ENCODE measurements at regions of chr10 and their contacts with region 1.

Region 1: DNA sequence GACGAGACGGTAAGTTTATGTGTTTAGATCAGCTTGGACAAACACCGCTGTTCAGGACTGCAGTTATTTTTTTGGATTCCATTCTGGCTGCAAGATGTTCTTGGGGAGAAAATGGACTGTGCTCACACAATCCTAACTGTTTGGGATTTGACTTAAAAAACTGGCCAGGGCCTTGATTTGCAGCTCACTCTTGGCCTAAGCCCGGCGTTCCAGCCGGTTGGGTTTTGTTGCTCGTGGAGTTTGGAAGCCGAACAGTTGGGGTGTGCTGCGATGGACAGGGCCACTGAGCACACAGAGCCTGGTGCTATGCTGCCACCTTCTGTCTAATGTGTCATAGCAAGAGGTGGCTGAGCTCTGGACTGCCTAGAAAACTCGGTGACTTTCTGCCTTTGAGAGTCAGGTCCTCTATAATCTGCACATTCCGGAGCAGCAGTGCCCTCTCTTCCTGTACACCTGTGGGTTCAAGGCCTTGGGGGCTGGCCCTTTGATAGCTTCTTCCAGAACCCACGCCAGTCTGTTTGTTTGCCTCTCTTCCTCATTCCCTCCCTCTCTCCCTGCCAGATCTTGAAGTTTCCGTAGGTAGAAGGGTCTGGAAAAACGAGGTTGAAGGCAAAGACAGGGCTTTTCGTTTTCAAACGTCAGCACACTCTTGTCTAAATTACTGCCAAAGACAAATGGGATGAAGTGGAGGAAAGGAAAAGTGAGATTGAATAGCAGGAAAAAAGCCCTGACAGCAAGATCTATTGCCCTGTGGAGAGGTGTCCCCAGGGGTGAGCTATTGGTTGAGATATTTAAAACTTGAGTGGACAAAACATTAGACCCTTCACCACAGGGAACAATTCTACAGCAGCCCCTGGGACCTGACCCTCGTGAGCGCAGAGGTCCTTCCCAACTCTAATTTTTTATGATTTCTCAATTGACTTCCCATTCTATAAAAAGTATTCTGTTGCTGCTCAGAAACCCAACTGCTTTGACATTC is 167.5 kb upstream of the HABP2 start:
- DNase-seq: peak; percentile 83
- H3K4me3 Mint-ChIP-seq: no peak overlapping the region
- H3K27ac Mint-ChIP-seq: no peak overlapping the region
- H3K4me1 Mint-ChIP-seq: peaks cover 20% of the 10 kb centered on the region
- H3K27me3 Mint-ChIP-seq: peaks cover 32% of the 10 kb centered on the region
- CTCF ChIP-seq: peak; percentile 91

Region 2: GRCh38 chr10:112487964-112488363 is 897.3 kb before region 1 on chr10:
- CTCF ChIA-PET with region 1: interaction called, 10 read pairs
- POLR2A ChIA-PET with region 1: no interaction called
- intact Hi-C with region 1: no loop called
- DNase-seq: no peak
- H3K4me3 Mint-ChIP-seq: no peak overlapping the region
- H3K27ac Mint-ChIP-seq: no peak overlapping the region
- H3K4me1 Mint-ChIP-seq: peaks cover 6% of the 10 kb centered on the region
- H3K27me3 Mint-ChIP-seq: no peaks in the 10 kb centered on the region
- CTCF ChIP-seq: no peak

Region 3: DNA sequence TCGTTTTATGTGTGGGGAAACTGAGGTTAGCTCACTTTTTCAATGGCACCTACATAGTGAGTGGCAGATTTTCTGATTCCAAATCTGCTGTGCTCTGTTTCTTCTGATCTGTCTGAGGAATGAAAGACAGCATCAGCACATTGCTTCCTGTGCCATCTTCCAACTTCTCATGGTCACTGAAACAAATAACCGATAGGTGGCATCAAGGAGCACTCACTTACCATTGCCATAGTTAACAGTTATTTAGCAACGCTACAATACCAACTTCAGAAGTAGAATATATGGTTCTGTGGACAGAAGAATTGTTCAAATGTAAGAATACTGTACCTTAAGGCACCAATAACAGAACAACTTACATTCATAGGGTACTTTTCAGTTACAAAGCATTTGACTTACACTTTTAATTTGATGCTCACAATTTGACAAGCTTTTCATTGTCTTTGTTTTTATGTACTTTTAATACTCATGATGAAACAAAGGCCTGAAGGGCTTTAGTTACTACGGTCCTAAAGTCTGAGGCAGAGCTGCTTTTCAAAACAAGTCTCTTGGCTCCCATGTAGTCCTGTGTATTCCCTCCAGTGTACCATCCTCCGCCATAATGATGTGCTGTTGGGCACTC is 664.1 kb before region 1 on chr10:
- CTCF ChIA-PET with region 1: interaction called, 3 read pairs
- POLR2A ChIA-PET with region 1: no interaction called
- intact Hi-C with region 1: loop called (anchors 2 kb)
- DNase-seq: peak; percentile 71
- H3K4me3 Mint-ChIP-seq: no peak overlapping the region
- H3K27ac Mint-ChIP-seq: no peak overlapping the region
- H3K4me1 Mint-ChIP-seq: peaks cover 7% of the 10 kb centered on the region
- H3K27me3 Mint-ChIP-seq: no peaks in the 10 kb centered on the region
- CTCF ChIP-seq: peak; percentile 78

Region 4: DNA sequence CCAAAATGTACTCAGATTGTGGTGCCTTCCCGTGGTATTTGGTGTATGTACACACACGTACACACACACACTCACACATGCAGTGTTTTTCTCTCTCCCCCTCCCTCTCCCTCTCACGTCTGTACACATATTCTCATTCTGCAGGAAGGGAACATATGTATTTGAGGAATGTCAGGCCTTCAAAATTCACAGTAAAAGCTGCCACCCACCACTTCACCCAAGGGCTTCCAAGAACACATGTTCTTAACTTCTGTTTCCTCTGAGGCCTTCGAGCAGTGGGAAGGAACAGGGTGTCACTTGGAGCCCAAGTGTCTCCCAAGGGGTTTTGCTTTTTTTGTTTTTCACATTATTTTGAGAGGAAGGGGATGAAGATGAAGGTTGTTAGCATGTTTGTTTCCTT is 236.4 kb before region 1 on chr10:
- CTCF ChIA-PET with region 1: interaction called, 13 read pairs
- POLR2A ChIA-PET with region 1: no interaction called
- intact Hi-C with region 1: loop called (anchors 5 kb)
- DNase-seq: no peak
- H3K4me3 Mint-ChIP-seq: no peak overlapping the region
- H3K27ac Mint-ChIP-seq: no peak overlapping the region
- H3K4me1 Mint-ChIP-seq: no peaks in the 10 kb centered on the region
- H3K27me3 Mint-ChIP-seq: no peaks in the 10 kb centered on the region
- CTCF ChIP-seq: no peak

Region 5: DNA sequence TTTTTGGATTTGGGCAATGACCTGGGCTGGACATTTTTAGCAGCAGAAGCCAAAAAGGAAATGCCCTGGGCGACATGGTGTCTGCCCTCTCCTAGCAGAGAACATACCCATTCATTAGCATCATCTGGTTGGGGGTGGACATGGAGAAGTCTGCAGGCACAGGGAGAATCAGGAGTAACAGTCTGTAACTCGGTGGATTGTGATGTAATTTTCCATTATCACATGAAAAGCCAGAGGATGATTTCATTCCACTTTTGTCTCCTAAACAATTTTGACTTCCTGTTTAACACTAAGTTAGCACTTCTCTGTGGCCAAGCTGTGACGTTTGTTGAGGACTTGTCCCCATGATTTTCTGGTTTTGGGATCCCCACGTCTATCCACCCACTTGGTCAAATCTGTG is 13.8 kb after region 1 on chr10:
- CTCF ChIA-PET with region 1: interaction called, 10 read pairs
- POLR2A ChIA-PET with region 1: no interaction called
- intact Hi-C with region 1: no loop called
- DNase-seq: no peak
- H3K4me3 Mint-ChIP-seq: no peak overlapping the region
- H3K27ac Mint-ChIP-seq: no peak overlapping the region
- H3K4me1 Mint-ChIP-seq: no peaks in the 10 kb centered on the region
- H3K27me3 Mint-ChIP-seq: peaks cover 14% of the 10 kb centered on the region
- CTCF ChIP-seq: no peak

Region 6: GRCh38 chr10:113563306-113564088 is 178.2 kb after region 1 on chr10:
- CTCF ChIA-PET with region 1: interaction called, 8 read pairs
- POLR2A ChIA-PET with region 1: no interaction called
- intact Hi-C with region 1: loop called (anchors 2 kb)
- DNase-seq: peak; percentile 71
- H3K4me3 Mint-ChIP-seq: peak overlapping the region; percentile 70
- H3K27ac Mint-ChIP-seq: no peak overlapping the region
- H3K4me1 Mint-ChIP-seq: peaks cover 4% of the 10 kb centered on the region
- H3K27me3 Mint-ChIP-seq: peaks cover 12% of the 10 kb centered on the region
- CTCF ChIP-seq: peak; percentile 97

Measured in MCF 10A (cell line).